Sigmoid colon (tissue), 7 donors: ENCODE measurements at regions of chr4 and their contacts with region 1.

Region 1: DNA sequence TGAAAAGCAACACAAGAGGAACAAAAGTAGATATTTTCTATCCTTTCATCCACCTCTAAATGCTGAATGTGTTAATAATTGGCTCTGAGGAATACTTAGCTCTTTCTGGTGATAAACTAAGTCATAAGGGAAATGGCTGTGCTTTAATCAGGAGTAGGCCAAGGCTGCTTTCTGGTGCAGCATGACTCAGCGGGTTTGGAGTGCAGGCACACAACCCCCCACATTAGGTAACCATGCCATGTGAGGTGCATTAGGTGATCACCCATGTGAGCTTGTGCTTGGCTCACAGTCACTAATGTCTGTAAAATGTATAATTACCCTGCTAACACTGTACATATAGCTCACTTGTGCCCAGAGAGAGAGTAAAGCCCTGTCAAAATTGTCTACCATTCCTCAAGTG is 57.2 kb downstream of the USP38 start:
- DNase-seq: no peak
- H3K4me3 ChIP-seq: no peak overlapping the region
- H3K27ac ChIP-seq: peak overlapping the region in 2 of 4 donors; percentile 36 to 68
- H3K4me1 ChIP-seq: peaks cover 0 to 15% (median 4%) of the 10 kb centered on the region in 4 donors
- H3K27me3 ChIP-seq: no peaks in the 10 kb centered on the region
- CTCF ChIP-seq: no peak
- EP300 ChIP-seq: no peak
- POLR2A ChIP-seq: no peak

Region 2: DNA sequence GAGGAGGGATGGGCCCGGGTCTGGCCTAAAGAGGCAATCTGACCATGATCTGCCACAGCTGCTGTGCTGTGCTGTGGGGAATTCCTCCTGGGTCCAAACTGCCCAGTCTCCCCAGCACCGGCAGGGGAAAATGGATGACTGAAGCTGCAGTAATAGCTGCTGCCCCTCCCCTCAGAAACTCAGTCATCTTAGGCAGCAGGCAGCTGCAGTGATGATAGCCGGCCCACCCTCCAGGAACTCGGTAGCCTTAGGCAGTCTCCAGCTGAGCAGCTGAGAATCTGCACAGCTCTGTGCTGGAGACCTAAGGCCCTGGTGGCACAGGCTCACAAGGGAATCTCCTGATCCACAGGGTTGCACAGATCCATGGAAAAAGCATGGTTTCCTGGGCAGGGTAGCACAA is 170.5 kb before region 1 on chr4:
- intact Hi-C with region 1: no loop called
- DNase-seq: no peak
- H3K4me3 ChIP-seq: no peak overlapping the region
- H3K27ac ChIP-seq: no peak overlapping the region
- H3K4me1 ChIP-seq: no peaks in the 10 kb centered on the region
- H3K27me3 ChIP-seq: no peaks in the 10 kb centered on the region
- CTCF ChIP-seq: no peak
- EP300 ChIP-seq: no peak
- POLR2A ChIP-seq: no peak

Region 3: GRCh38 chr4:143286701-143287571 is 45.0 kb after region 1 on chr4:
- intact Hi-C with region 1: loop called (anchors 5 kb)
- DNase-seq: no peak
- H3K4me3 ChIP-seq: no peak overlapping the region
- H3K27ac ChIP-seq: peak overlapping the region; percentile 60 to 82 (median 66)
- H3K4me1 ChIP-seq: peaks cover 0 to 38% (median 28%) of the 10 kb centered on the region in 4 donors
- H3K27me3 ChIP-seq: no peaks in the 10 kb centered on the region
- CTCF ChIP-seq: no peak
- EP300 ChIP-seq: no peak
- POLR2A ChIP-seq: no peak